Heart left ventricle (tissue), 16 donors: ENCODE measurements at regions of chr7 and their contacts with region 1.

Region 1: GRCh38 chr7:47702080-47702479 is 120.2 kb upstream of the TNS3 start:
- DNase-seq: no peak
- ATAC-seq: no peak
- H3K4me3 ChIP-seq: no peak overlapping the region
- H3K27ac ChIP-seq: no peak overlapping the region
- H3K4me1 ChIP-seq: no peaks in the 10 kb centered on the region
- H3K27me3 ChIP-seq: no peaks in the 10 kb centered on the region
- CTCF ChIP-seq: no peak
- POLR2A ChIP-seq: no peak

Region 2: DNA sequence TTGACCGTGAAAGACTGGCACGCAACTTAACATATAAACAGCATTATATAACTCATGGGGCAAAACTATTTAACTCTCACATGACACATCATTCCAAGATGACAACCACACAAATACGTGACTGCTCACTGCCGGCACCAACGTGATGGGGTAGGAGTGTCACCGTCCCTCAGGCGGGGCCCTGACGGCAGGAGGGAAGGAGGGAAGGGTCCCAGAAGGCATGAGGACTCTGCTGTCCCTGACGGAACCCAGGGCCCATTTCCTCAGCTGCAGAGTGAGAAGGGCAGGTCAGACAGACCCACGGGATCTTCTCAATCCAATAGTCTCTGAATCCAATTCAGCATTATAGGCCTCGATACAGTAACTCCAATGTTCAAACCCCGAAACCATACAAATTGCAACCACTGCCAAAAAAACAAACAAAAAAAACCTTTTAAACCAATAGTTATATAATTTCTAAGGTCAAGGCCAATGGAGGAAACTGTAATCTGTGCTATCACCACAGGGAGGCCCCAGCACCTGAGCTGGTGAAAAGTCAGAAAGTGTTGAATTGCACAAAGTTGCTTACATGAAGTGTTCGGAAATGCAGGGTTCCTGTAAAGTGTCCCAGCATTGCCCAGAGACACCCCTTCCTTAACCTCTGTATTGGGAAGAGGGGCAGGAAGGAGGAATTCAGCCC is 257.6 kb before region 1 on chr7:
- intact Hi-C with region 1: no loop called
- DNase-seq: no peak
- ATAC-seq: peak in 1 of 4 donors; percentile 32
- H3K4me3 ChIP-seq: no peak overlapping the region
- H3K27ac ChIP-seq: peak overlapping the region in 1 of 12 donors; percentile 50
- H3K4me1 ChIP-seq: peaks cover 0 to 44% (median 22%) of the 10 kb centered on the region in 12 donors
- H3K27me3 ChIP-seq: no peaks in the 10 kb centered on the region
- CTCF ChIP-seq: peak; percentile 23 to 63 (median 48)
- POLR2A ChIP-seq: no peak

Region 3: GRCh38 chr7:47625861-47626715 is 76.0 kb before region 1 on chr7:
- intact Hi-C with region 1: loop called in 1 of 10 experiments (anchors 2 kb)
- DNase-seq: no peak
- ATAC-seq: no peak
- H3K4me3 ChIP-seq: no peak overlapping the region
- H3K27ac ChIP-seq: no peak overlapping the region
- H3K4me1 ChIP-seq: peaks cover 0 to 40% (median 11%) of the 10 kb centered on the region in 12 donors
- H3K27me3 ChIP-seq: no peaks in the 10 kb centered on the region
- CTCF ChIP-seq: no peak
- POLR2A ChIP-seq: no peak

Region 4: GRCh38 chr7:47792521-47793121 is 90.5 kb after region 1 on chr7:
- intact Hi-C with region 1: no loop called
- DNase-seq: no peak
- ATAC-seq: peak in 1 of 4 donors; percentile 54
- H3K4me3 ChIP-seq: no peak overlapping the region
- H3K27ac ChIP-seq: no peak overlapping the region
- H3K4me1 ChIP-seq: no peaks in the 10 kb centered on the region
- H3K27me3 ChIP-seq: no peaks in the 10 kb centered on the region
- CTCF ChIP-seq: peak; percentile 19 to 61 (median 52)
- POLR2A ChIP-seq: no peak

Region 5: GRCh38 chr7:49577576-49577975 is 1875.5 kb after region 1 on chr7:
- intact Hi-C with region 1: loop called in 1 of 10 experiments (anchors 2 kb)
- DNase-seq: no peak
- ATAC-seq: no peak
- H3K4me3 ChIP-seq: no peak overlapping the region
- H3K27ac ChIP-seq: no peak overlapping the region
- H3K4me1 ChIP-seq: peaks cover 0 to 4% (median 0%) of the 10 kb centered on the region in 12 donors
- H3K27me3 ChIP-seq: no peaks in the 10 kb centered on the region
- CTCF ChIP-seq: no peak
- POLR2A ChIP-seq: no peak